ENCODE measurements at regions of chr3 and their contacts with region 1.

Region 1: GRCh38 chr3:49093853-49094767 is at the start of gene QRICH1:
- H3K4me3 ChIP-seq: peak within 1 kb of the TSS; percentile 93
- H3K27ac ChIP-seq: peak within 1 kb of the TSS; percentile 86
- H3K4me1 ChIP-seq: peaks cover 3% of the 10 kb centered on the region; the same call in 1 of the 2 replicates
- CTCF ChIP-seq: peak; percentile 74

Region 2: GRCh38 chr3:48877671-48878070 is 216.4 kb before region 1 on chr3:
- CTCF ChIA-PET with region 1: no interaction called
- POLR2A ChIA-PET with region 1: no interaction called
- H3K4me3 ChIP-seq: no peak overlapping the region
- H3K27ac ChIP-seq: no peak overlapping the region
- H3K4me1 ChIP-seq: no peaks in the 10 kb centered on the region
- CTCF ChIP-seq: no peak

Region 3: DNA sequence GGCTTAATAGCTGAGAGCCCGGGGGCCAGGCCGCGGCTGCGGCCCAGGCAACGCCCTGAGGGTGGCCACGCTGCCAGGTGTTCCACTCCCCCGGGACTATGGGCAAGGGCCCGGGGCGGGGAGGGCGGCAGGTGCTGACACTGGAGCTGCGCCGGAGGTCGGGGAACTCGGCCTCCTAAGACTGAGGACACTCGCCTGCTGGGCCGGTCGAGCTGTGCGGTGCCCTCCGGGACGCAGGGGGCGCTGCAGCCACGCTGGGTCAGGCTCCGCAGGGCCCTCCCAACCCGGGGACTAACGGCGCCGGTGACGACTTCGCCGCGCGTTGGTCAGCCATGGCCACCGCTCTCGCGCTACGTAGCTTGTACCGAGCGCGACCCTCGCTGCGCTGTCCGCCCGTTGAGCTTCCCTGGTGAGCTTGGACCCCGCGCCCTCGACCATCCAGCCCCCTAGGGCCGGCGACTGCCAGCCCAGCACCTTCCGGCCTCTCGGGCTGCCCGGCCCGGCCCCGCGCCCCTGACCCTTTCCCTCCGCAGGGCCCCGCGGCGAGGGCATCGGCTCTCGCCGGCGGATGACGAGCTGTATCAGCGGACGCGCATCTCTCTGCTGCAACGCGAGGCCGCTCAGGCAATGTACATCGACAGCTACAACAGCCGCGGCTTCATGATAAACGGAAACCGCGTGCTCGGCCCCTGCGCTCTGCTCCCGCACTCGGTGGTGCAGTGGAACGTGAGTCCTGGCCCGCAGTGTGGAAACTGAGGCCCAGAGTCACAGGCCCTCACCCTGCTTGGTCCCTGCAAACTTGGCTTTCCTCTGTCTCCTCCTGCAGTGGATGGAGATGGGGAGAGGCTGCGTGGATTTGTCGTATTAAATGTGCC is 72.1 kb before region 1 on chr3 and contains the start of gene NDUFAF3:
- CTCF ChIA-PET with region 1: interaction called, 5 read pairs
- POLR2A ChIA-PET with region 1: interaction called, 29 read pairs
- H3K4me3 ChIP-seq: peak within 1 kb of the TSS; percentile 92
- H3K27ac ChIP-seq: peak within 1 kb of the TSS; percentile 93
- H3K4me1 ChIP-seq: no peaks in the 10 kb centered on the region
- CTCF ChIP-seq: peak; percentile 99

Region 4: DNA sequence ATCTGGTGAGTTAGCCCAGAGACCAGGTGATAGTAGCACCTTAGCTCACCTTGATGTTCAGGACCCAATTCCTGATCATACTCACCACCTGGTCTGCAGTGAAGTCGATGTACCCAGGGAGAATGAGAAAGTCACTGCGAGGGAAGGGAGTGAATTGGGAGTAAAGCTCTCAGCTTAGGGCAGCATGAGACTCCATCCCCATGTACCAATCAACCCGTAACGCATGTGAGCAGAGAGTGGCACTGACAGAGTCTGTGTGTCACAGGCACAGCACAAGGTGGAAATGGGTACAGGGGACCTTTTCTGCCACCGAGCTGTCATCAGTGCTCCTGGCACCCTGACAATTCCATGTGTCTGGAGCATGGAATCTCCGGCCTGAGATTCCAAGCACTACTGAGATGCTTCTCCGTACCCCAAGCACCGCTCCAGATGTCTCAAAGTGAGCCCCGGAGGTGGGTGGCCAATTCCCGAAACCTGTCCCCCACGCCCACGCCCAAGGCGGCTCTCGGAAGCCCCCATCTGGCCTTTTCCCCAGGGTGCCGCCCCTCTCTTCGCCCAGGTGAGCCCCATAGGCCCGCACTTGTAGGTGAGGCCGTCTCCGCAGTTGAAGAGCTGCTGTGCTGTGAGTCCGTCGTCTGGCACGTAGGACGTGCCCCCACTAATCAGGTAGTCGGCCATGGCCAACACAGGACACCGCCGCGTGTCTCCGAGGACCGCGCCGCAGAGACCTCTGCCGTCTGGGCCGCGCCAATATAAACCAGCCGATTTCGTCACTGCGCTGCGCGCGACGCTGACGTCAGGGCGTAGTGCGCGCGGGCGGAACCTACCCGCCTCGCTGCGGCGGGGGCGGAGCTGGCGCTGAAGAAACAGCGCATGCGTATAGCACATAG is 65.2 kb before region 1 on chr3 and contains the start of gene IMPDH2:
- CTCF ChIA-PET with region 1: interaction called, 4 read pairs
- POLR2A ChIA-PET with region 1: interaction called, 15 read pairs
- H3K4me3 ChIP-seq: peak within 1 kb of the TSS; percentile 83
- H3K27ac ChIP-seq: peak within 1 kb of the TSS; percentile 58
- H3K4me1 ChIP-seq: no peaks in the 10 kb centered on the region
- CTCF ChIP-seq: peak; percentile 48

Region 5: DNA sequence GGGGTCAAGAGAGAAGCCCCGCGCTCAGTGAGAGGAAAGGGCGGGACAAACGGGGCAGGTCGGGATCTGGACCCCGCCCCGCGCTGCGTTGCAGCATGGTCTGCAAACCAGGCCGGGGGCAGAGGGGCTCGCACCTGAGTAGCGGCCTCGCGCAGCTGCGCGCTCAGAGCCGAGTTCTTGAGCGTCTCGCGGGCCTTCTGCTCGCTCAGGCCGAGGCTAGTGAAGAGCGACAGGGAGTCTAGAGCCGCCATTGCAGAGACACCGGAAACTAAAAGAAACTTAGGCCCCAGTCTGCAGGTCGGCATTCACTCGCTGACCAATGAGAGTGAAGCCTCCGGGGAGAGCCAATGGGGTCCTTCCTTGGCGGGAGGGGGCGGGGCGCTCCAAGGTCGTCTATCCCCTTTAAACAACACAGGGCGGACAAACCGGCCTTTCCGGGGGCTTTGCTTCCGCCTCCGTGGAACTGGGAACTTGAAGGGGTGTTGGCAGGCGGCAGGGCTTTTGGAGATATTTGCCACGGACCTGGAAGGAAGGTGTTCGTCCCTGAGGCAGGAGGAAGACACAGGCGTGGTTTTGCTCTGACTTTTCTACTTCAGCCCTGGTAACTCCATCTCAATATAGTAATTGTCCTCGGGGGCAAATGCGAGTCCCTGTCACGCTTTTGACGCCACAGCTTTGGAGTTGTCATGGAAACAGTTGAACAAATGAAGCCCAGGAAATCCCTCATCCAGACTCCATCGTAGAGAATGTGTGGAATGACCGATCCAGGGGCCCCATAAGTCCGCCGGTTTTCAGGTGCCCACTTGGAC is 10.6 kb after region 1 on chr3 and contains the start of gene QARS1:
- CTCF ChIA-PET with region 1: interaction called, 4 read pairs
- POLR2A ChIA-PET with region 1: interaction called, 35 read pairs
- H3K4me3 ChIP-seq: peak within 1 kb of the TSS; percentile 97
- H3K27ac ChIP-seq: peak within 1 kb of the TSS; percentile 70
- H3K4me1 ChIP-seq: no peaks in the 10 kb centered on the region
- CTCF ChIP-seq: no peak

Region 6: GRCh38 chr3:49120438-49121131 is 26.5 kb after region 1 on chr3 and contains the start of gene USP19:
- CTCF ChIA-PET with region 1: interaction called, 3 read pairs
- POLR2A ChIA-PET with region 1: interaction called, 18 read pairs
- H3K4me3 ChIP-seq: peak within 1 kb of the TSS; percentile 99
- H3K27ac ChIP-seq: peak within 1 kb of the TSS; percentile 69
- H3K4me1 ChIP-seq: peaks cover 6% of the 10 kb centered on the region; the same call in 1 of the 2 replicates
- CTCF ChIP-seq: 0 out of 2 replicates have a peak, but pooled peaks have one; percentile 36

Region 7: GRCh38 chr3:49153349-49153912 is 59.3 kb after region 1 on chr3:
- CTCF ChIA-PET with region 1: no interaction called
- POLR2A ChIA-PET with region 1: no interaction called
- H3K4me3 ChIP-seq: no peak overlapping the region
- H3K27ac ChIP-seq: no peak overlapping the region
- H3K4me1 ChIP-seq: no peaks in the 10 kb centered on the region
- CTCF ChIP-seq: no peak